Activated CD8-positive, alpha-beta T cell treated with anti-CD3 and anti-CD28 coated beads for 36 hours (primary cell): ENCODE measurements at regions of chr10 and their contacts with region 1.

Region 1: DNA sequence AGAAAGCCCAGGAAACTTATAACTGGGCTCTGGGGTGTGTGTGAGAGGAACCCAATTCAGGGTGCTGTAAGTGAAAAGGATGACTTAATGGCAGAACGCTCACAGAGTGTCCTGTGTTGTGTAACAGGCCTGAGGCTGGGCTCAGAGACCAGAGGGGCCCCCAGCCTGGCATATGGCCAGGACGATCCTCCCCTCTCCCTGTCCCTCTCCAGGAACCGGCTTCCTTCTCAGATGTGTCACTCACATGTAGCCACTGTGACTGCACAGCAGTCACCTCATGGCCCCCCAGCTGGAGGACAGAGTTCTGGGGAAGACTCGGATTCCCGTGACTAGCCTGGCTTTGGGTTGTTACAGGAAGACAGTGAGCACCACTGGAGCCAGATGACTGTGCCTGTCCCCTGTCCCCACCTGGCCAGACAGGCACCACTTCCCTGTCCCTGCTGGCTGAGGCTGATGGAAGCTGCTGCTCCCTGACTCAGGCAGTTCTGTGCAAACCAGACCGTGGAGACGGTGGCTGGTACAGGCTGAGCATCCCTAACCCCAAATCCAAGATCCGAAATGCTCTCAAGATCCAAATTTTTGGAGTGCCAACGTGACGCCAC is 220.5 kb downstream of the MLLT10 start:
- DNase-seq: no peak
- ATAC-seq: no peak
- H3K4me3 Mint-ChIP-seq: no peak overlapping the region
- H3K27ac Mint-ChIP-seq: no peak overlapping the region
- H3K4me1 Mint-ChIP-seq: no peaks in the 10 kb centered on the region
- H3K27me3 Mint-ChIP-seq: no peaks in the 10 kb centered on the region
- CTCF ChIP-seq: no peak

Region 2: DNA sequence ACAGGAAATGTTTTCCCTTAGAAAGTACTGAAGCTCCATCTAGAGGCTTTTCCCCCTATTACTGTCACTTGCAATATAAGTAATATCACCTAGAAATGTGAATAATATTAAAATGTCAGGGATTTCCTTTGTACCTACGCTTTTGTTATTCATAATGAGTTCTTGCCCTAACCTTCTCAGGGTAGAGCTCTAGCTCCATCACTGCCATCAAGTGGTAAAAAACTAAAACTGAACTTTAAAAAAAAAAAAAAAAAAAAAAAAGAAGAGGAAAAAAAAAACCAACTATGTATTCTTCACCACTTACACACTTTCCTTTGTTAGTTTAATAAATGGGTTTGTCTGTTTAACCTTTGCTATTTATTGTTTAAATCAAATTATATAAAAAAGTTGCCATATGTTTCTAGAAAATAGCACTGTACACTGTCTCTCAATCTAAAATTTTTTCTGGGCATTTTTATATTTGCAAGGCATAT is 199.1 kb after region 1 on chr10:
- CTCF ChIA-PET with region 1: interaction called, 3 read pairs
- POLR2A ChIA-PET with region 1: no interaction called
- intact Hi-C with region 1: loop called (anchors 10 kb)
- DNase-seq: no peak
- ATAC-seq: peak; percentile 95
- H3K4me3 Mint-ChIP-seq: no peak overlapping the region
- H3K27ac Mint-ChIP-seq: no peak overlapping the region
- H3K4me1 Mint-ChIP-seq: peaks cover 9% of the 10 kb centered on the region
- H3K27me3 Mint-ChIP-seq: no peaks in the 10 kb centered on the region
- CTCF ChIP-seq: peak; percentile 67